ENCODE measurements at regions of chr2 and their contacts with region 1.

Region 1: GRCh38 chr2:27059141-27059820 is 7.8 kb downstream of the AGBL5 start:
- DNase-seq: no peak
- H3K4me3 ChIP-seq: no peak overlapping the region
- H3K27ac ChIP-seq: no peak overlapping the region
- H3K4me1 ChIP-seq: no peaks in the 10 kb centered on the region
- H3K27me3 ChIP-seq: no peaks in the 10 kb centered on the region
- CTCF ChIP-seq: no peak

Region 2: GRCh38 chr2:26942543-26943295 is 116.6 kb before region 1 on chr2:
- CTCF ChIA-PET with region 1: no interaction called
- POLR2A ChIA-PET with region 1: interaction called, 13 read pairs
- intact Hi-C with region 1: no loop called
- DNase-seq: peak in 1 of 2 experiments; percentile 44
- H3K4me3 ChIP-seq: no peak overlapping the region
- H3K27ac ChIP-seq: no peak overlapping the region
- H3K4me1 ChIP-seq: no peaks in the 10 kb centered on the region; the same call in 1 of the 2 replicates
- H3K27me3 ChIP-seq: 0 out of 2 replicates have a peak, but pooled peaks cover 5% of the 10 kb centered on the region
- CTCF ChIP-seq: peak; percentile 90

Measured in PC-9 (cell line).